ENCODE measurements at regions of chr6 and their contacts with region 1.

Region 1: GRCh38 chr6:132279592-132280139 is 121.6 kb downstream of the MOXD1 start:
- DNase-seq: peak; percentile 75

Region 2: DNA sequence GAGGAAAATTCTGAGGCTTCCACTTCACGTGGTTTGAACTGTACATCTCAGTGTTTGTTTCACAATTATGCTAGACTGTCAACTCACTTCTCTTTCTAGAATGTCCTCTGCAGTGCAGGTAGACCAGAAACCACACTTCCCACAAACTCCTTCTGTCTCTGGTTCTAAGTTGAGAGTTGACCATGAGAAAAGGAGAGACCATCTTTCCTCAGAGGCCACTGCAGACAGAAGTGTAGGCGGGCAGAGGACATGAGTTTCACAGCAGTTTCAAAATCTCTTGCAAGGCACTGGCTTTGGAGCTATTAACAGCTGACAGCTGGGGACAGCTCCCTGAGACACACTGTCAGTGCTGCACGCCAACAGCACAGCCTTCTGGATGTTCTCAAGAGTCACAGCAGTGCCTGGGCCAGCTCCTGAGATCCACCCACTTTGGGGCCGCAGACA is 177.1 kb after region 1 on chr6:
- in situ Hi-C with region 1: loop called (anchors 25 kb)
- DNase-seq: no peak

Region 3: DNA sequence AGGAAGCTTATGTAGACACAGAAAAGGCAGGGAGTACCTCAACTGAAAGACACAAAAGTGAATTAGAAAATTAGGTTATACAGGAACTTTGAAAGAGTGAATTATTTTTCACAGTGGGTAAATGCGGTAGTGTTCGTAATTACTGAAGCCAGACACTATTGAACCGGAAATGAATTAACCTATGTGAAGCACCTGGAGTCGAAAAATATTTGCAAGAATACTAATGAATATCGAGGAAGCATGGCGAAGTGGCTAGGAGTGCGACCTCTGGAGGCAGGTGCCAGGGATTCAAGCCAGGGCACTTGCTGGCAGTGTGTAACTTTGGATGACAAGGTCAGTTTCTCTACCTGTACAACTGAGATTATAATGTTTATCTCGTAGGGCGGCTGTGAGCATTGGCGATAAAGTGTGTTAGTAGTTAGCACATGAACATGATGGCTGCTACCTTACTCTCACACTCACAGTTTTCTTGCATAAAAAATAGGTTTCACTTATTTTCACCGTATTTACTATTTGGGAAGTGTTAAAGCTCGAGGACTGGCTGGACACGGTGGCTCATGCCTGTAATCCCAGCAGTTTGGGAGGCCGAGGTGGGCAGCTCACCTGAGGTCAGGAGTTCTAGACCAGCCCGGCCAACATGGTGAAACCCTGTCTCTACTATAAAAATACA is 519.3 kb after region 1 on chr6:
- in situ Hi-C with region 1: loop called (anchors 25 kb)
- DNase-seq: peak; percentile 71